ENCODE measurements at regions of chr7 and their contacts with region 1.

Region 1: GRCh38 chr7:152081088-152081487 is 55.6 kb downstream of the GALNT11 start:
- H3K4me3 Mint-ChIP-seq: no peak overlapping the region
- H3K27ac Mint-ChIP-seq: no peak overlapping the region
- H3K4me1 Mint-ChIP-seq: peaks cover 48% of the 10 kb centered on the region
- H3K27me3 Mint-ChIP-seq: no peaks in the 10 kb centered on the region

Region 2: GRCh38 chr7:152025077-152025936 is 55.8 kb before region 1 on chr7 and contains the start of gene GALNT11:
- intact Hi-C with region 1: loop called (anchors 5 kb)
- H3K4me3 Mint-ChIP-seq: peak within 1 kb of the TSS; percentile 84
- H3K27ac Mint-ChIP-seq: peak within 1 kb of the TSS; percentile 90
- H3K4me1 Mint-ChIP-seq: peaks cover 17% of the 10 kb centered on the region
- H3K27me3 Mint-ChIP-seq: peaks cover 7% of the 10 kb centered on the region

Region 3: GRCh38 chr7:152193880-152194279 is 112.8 kb after region 1 on chr7:
- intact Hi-C with region 1: no loop called
- H3K4me3 Mint-ChIP-seq: no peak overlapping the region
- H3K27ac Mint-ChIP-seq: no peak overlapping the region
- H3K4me1 Mint-ChIP-seq: no peaks in the 10 kb centered on the region
- H3K27me3 Mint-ChIP-seq: no peaks in the 10 kb centered on the region

Measured in dendritic cell treated with granulocyte-macrophage colony-stimulating factor and Interleukin-4, amounts not matched to agents 40 ng/mL and 50 ng/mL, for 4 days (primary cell).